CD4-positive, alpha-beta T cell (primary cell): ENCODE measurements at regions of chr14 and their contacts with region 1.

Region 1: GRCh38 chr14:55129428-55130195 is 560 bp downstream of the LGALS3 start:
- DNase-seq: peak; percentile 11 to 84 (median 21)
- ATAC-seq: peak; percentile 66
- H3K4me3 ChIP-seq: peak overlapping the region; percentile 59
- H3K4me3 Mint-ChIP-seq: peak overlapping the region; percentile 81
- H3K27ac ChIP-seq: no peak overlapping the region
- H3K27ac Mint-ChIP-seq: peak overlapping the region; percentile 11
- H3K4me1 ChIP-seq: peaks cover 38% of the 10 kb centered on the region
- H3K4me1 Mint-ChIP-seq: peaks cover 15% of the 10 kb centered on the region
- H3K27me3 ChIP-seq: peaks cover 6 to 16% of the 10 kb centered on the region in 2 experiments
- H3K27me3 Mint-ChIP-seq: peaks cover 54% of the 10 kb centered on the region
- CTCF ChIP-seq: no peak

Region 2: DNA sequence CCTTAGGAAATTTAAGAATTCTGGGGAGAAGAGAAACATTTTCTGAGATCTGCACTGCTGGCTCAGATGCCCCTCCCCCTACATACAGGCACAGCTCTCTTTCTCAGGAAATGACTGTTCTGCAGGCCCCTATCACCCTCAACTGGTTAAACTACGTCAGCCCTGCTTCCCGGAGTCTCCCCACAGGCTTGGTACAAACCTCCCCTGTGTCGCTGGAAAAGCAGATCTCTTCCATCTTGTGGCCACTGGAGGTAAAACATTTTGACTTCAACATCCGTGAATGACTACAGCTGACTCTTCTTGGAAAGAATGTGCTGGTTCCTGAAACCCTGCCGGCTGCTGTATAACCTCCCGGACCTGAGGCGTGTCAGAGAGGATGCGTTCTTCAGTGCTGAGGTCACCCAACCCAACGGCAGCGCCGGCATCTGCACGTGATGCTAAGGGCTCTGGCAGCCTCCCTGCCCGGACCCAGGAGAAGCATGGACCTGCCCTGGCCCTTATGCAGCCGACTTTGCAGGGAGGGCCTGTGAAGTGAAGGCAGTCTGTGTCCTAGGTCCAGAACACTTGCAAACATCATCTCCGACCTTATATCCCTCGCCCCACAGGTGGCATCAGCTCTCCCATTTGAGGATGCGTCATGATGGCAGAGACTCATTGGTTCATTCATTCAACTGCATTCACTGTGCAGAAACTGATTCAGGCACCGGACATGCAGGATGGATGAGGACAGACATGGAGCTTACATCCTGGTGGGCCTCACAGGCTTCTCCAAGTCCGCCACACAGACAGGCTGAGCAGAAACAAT is 356.2 kb before region 1 on chr14:
- CTCF ChIA-PET with region 1: no interaction called
- POLR2A ChIA-PET with region 1: no interaction called
- intact Hi-C with region 1: no loop called
- DNase-seq: peak; percentile 15 to 89 (median 44)
- ATAC-seq: peak; percentile 81
- H3K4me3 ChIP-seq: peak overlapping the region; percentile 28
- H3K4me3 Mint-ChIP-seq: peak overlapping the region; percentile 16
- H3K27ac ChIP-seq: peak overlapping the region in 1 of 2 donors; percentile 37
- H3K27ac Mint-ChIP-seq: peak overlapping the region; percentile 25
- H3K4me1 ChIP-seq: peaks cover 24% of the 10 kb centered on the region
- H3K4me1 Mint-ChIP-seq: peaks cover 14% of the 10 kb centered on the region
- H3K27me3 ChIP-seq: no peaks in the 10 kb centered on the region
- H3K27me3 Mint-ChIP-seq: no peaks in the 10 kb centered on the region
- CTCF ChIP-seq: peak; percentile 8

Region 3: DNA sequence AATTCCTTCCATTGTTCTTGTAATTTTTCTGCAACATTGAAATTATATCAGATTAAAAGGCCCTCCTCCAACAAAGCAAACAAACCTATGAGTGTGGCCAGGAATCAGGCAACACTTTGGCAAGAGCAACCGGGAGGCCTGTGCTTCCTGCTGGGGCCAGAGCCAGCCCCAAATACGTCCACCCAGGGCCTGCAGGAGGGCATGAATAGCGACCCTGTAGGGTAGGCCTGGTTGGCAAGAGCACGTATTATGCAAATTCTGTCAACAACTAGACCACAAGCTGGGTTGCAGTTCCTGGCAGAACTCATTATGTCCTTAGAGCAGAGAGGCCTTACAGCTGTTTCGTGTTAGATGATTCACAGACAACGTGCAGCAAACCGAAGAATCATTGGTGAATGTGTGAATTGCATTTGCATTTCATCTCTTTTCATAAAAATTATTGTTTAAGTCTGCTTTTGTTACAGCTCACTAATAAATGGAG is 27.4 kb before region 1 on chr14:
- CTCF ChIA-PET with region 1: interaction called, 4 read pairs
- POLR2A ChIA-PET with region 1: interaction called, 11 read pairs
- intact Hi-C with region 1: no loop called
- DNase-seq: peak in 12 of 14 experiments; percentile 15 to 77 (median 39)
- ATAC-seq: peak; percentile 61
- H3K4me3 ChIP-seq: no peak overlapping the region
- H3K4me3 Mint-ChIP-seq: peak overlapping the region; percentile 59
- H3K27ac ChIP-seq: peak overlapping the region in 1 of 2 donors; percentile 83
- H3K27ac Mint-ChIP-seq: peak overlapping the region; percentile 94
- H3K4me1 ChIP-seq: peaks cover 70% of the 10 kb centered on the region
- H3K4me1 Mint-ChIP-seq: peaks cover 51% of the 10 kb centered on the region
- H3K27me3 ChIP-seq: no peaks in the 10 kb centered on the region
- H3K27me3 Mint-ChIP-seq: no peaks in the 10 kb centered on the region
- CTCF ChIP-seq: no peak